CD4-positive, alpha-beta T cell (primary cell): ENCODE measurements at regions of chr3 and their contacts with region 1.

Region 1: GRCh38 chr3:51384726-51385473 is at the start of gene MANF:
- DNase-seq: peak; percentile 93 to 99 (median 95)
- ATAC-seq: peak; percentile 95
- H3K4me3 ChIP-seq: peak within 1 kb of the TSS; percentile 99
- H3K4me3 Mint-ChIP-seq: peak within 1 kb of the TSS; percentile 99
- H3K27ac ChIP-seq: peak within 1 kb of the TSS; percentile 84 to 96
- H3K27ac Mint-ChIP-seq: peak within 1 kb of the TSS; percentile 99
- H3K4me1 ChIP-seq: peaks cover 47% of the 10 kb centered on the region
- H3K4me1 Mint-ChIP-seq: peaks cover 55% of the 10 kb centered on the region
- H3K27me3 ChIP-seq: no peaks in the 10 kb centered on the region
- H3K27me3 Mint-ChIP-seq: no peaks in the 10 kb centered on the region
- CTCF ChIP-seq: no peak
- total RNA-seq, gene MANF: 26.4 to 30.2 TPM

Region 2: GRCh38 chr3:51024765-51025632 is 359.9 kb before region 1 on chr3:
- CTCF ChIA-PET with region 1: no interaction called
- POLR2A ChIA-PET with region 1: interaction called, 15 read pairs
- intact Hi-C with region 1: loop called in 1 of 2 experiments (anchors 5 kb)
- DNase-seq: peak; percentile 60 to 92 (median 76)
- ATAC-seq: peak; percentile 96
- H3K4me3 ChIP-seq: peak overlapping the region; percentile 32
- H3K4me3 Mint-ChIP-seq: peak overlapping the region; percentile 74
- H3K27ac ChIP-seq: peak overlapping the region; percentile 69
- H3K27ac Mint-ChIP-seq: peak overlapping the region; percentile 95
- H3K4me1 ChIP-seq: peaks cover 33% of the 10 kb centered on the region
- H3K4me1 Mint-ChIP-seq: peaks cover 66% of the 10 kb centered on the region
- H3K27me3 ChIP-seq: no peaks in the 10 kb centered on the region
- H3K27me3 Mint-ChIP-seq: no peaks in the 10 kb centered on the region
- CTCF ChIP-seq: no peak

Region 3: GRCh38 chr3:51670823-51671733 is 286.2 kb after region 1 on chr3 and contains the start of gene TEX264:
- CTCF ChIA-PET with region 1: interaction called, 3 read pairs
- POLR2A ChIA-PET with region 1: interaction called, 16 read pairs
- intact Hi-C with region 1: loop called in 1 of 2 experiments (anchors 5 kb)
- DNase-seq: peak; percentile 88 to 100 (median 95)
- ATAC-seq: peak; percentile 75
- H3K4me3 ChIP-seq: peak within 1 kb of the TSS; percentile 98
- H3K4me3 Mint-ChIP-seq: peak within 1 kb of the TSS; percentile 94
- H3K27ac ChIP-seq: peak within 1 kb of the TSS; percentile 83 to 91
- H3K27ac Mint-ChIP-seq: peak within 1 kb of the TSS; percentile 97
- H3K4me1 ChIP-seq: peaks cover 67% of the 10 kb centered on the region
- H3K4me1 Mint-ChIP-seq: peaks cover 80% of the 10 kb centered on the region
- H3K27me3 ChIP-seq: no peaks in the 10 kb centered on the region
- H3K27me3 Mint-ChIP-seq: no peaks in the 10 kb centered on the region
- CTCF ChIP-seq: no peak
- total RNA-seq, gene TEX264: 24.9 to 25.9 TPM